MCF 10A (cell line): ENCODE measurements at regions of chr11 and their contacts with region 1.

Region 1: GRCh38 chr11:64846998-64847666 is 2.7 kb upstream of the CDC42BPG start:
- DNase-seq: peak; percentile 94
- H3K4me3 Mint-ChIP-seq: no peak overlapping the region
- H3K27ac Mint-ChIP-seq: no peak overlapping the region
- H3K4me1 Mint-ChIP-seq: peaks cover 33% of the 10 kb centered on the region
- H3K27me3 Mint-ChIP-seq: no peaks in the 10 kb centered on the region
- CTCF ChIP-seq: peak; percentile 98

Region 2: DNA sequence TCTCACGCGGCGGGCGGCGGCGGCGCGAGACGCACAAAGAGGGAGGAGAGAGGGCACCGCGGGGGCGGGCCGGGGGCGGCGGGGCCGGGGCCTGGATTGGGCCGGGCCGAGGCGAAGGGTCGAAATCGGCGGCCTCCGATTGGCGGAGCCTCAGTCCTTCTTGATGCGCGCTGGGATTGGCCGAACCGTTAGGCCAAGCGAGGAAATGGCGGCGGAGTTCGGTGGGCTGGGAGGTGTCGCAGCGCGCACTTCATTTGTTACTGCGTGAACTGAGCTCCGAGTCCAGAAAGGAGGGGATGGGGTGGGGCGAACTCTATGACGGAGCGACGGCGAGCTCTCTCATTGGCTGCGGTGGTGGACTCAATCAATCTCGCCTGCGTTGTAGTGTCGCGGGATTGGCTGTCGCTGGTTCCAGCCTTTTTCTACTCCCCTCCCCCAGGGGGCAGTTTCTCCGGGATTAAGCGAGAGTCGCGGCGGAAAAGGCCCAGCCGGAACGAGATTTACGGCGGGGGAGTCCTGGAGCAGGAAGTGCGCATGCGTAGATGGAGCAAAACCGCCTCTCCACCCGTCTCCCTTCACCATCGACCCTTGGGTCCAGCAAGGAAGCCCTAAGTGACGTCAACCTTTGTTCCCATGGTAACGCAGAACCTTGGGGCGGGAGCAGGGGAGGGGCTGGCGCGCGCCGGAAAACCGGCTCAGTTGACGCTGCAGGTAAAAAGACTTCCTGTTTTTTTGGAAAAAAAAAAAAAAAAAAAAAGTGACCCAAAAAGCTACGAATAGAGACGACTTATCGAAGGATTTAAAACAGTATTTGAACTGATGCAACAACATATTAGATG is 68.4 kb before region 1 on chr11 and contains the start of gene SF1:
- CTCF ChIA-PET with region 1: interaction called, 5 read pairs
- POLR2A ChIA-PET with region 1: interaction called, 12 read pairs
- intact Hi-C with region 1: no loop called
- DNase-seq: peak; percentile 100
- H3K4me3 Mint-ChIP-seq: peak within 1 kb of the TSS; percentile 76
- H3K27ac Mint-ChIP-seq: peak within 1 kb of the TSS; percentile 98
- H3K4me1 Mint-ChIP-seq: peaks cover 13% of the 10 kb centered on the region
- H3K27me3 Mint-ChIP-seq: no peaks in the 10 kb centered on the region
- CTCF ChIP-seq: no peak
- total RNA-seq, gene SF1: 446 and 503 TPM in 2 replicates

Region 3: GRCh38 chr11:64803163-64803845 is 43.8 kb before region 1 on chr11 and contains the start of gene MAP4K2:
- CTCF ChIA-PET with region 1: interaction called, 7 read pairs
- POLR2A ChIA-PET with region 1: interaction called, 8 read pairs
- intact Hi-C with region 1: loop called (anchors 2 kb)
- DNase-seq: peak; percentile 87
- H3K4me3 Mint-ChIP-seq: peak within 1 kb of the TSS; percentile 88
- H3K27ac Mint-ChIP-seq: peak within 1 kb of the TSS; percentile 81
- H3K4me1 Mint-ChIP-seq: peaks cover 9% of the 10 kb centered on the region
- H3K27me3 Mint-ChIP-seq: no peaks in the 10 kb centered on the region
- CTCF ChIP-seq: peak; percentile 16
- total RNA-seq, gene MAP4K2: 4.9 and 6.8 TPM in 2 replicates

Region 4: DNA sequence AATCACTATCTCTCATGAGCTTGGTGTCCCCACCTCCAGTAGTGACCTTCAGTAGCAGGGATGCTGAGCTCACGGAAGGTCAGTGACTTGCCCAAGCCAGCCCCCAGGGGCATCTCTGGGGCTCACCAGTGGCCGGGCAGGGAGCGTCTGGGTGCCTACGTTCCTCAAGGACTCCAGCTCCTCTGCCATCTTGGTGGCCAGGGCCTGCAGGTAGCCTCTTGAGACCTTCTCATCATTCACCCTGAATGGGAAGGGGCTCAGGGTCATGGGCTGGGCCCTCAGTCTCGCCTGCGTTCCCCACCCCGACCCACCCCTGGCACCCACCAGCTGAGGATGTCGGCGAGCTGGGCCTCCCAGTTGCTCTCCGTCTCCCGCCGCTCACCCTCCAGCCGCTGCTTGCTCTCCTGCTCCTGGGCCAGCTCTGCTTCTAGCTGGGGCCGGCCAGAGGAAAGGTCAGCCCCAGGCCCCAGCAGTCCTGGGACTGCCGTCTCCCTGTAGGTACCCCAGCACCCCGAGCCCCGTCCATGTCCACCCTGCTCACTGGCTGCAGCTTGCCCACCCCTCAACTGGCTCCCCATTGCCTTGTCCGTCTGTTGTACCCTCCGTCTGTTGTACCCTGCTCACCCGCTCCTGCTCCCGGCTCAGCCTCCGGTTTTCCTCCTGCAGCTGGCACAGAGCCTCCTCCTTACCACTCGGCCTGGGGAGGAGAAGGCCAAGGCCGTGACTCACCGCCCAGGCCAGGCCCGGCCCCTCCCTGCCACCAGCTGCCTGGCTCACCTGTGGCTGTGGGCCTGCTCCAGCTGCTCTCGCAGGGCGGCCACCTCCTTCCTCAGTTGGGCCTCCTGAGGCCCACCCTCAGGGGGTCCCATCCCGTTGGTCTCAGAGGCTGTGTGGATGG is 12.2 kb before region 1 on chr11:
- CTCF ChIA-PET with region 1: interaction called, 16 read pairs
- POLR2A ChIA-PET with region 1: interaction called, 13 read pairs
- intact Hi-C with region 1: no loop called
- DNase-seq: peak; percentile 87
- H3K4me3 Mint-ChIP-seq: peak overlapping the region; percentile 60
- H3K27ac Mint-ChIP-seq: peak overlapping the region; percentile 28
- H3K4me1 Mint-ChIP-seq: peaks cover 10% of the 10 kb centered on the region
- H3K27me3 Mint-ChIP-seq: no peaks in the 10 kb centered on the region
- CTCF ChIP-seq: no peak

Region 5: DNA sequence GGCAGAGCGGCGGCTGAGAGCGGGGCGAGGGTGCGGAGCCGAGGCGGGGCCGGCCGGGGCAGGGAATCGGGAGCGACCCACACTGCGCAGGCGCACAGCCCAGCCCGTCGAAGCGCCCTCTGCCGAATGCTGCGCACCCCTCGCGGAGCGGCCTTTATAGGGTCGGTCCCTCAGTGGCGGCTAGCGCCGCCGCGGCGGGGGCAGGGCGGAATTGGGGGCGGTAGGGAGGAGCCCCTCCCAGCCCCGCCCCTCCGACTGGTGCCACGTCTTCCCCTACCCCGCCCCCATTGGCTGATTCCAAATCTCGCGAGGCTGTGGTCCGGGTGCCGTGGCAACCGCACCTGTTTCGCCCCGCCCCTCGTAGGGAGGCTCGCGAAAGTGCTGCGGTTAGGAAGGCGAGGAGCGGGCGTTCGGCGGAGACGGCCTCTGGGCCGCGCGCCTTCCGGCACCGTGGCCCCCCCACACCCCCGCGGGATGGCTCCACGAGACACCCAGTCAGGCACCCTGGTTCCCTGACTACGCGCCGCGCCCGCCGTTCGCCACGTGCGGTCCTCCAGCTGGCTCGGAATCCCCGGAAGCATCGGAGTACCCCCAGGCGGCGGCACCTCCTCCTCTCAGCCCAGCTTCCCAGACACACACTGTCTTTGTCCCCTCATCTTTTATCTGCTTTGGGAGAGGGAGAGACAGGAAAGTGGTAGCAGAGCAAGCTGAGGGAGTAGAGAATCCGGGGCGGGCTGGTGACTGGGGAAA is 31.5 kb after region 1 on chr11 and contains the start of gene EHD1:
- CTCF ChIA-PET with region 1: interaction called, 286 read pairs
- POLR2A ChIA-PET with region 1: interaction called, 22 read pairs
- intact Hi-C with region 1: loop called (anchors 1 kb)
- DNase-seq: peak; percentile 98
- H3K4me3 Mint-ChIP-seq: peak within 1 kb of the TSS; percentile 95
- H3K27ac Mint-ChIP-seq: peak within 1 kb of the TSS; percentile 95
- H3K4me1 Mint-ChIP-seq: peaks cover 22% of the 10 kb centered on the region
- H3K27me3 Mint-ChIP-seq: no peaks in the 10 kb centered on the region
- CTCF ChIP-seq: peak; percentile 27
- total RNA-seq, gene EHD1: 67.9 and 80.6 TPM in 2 replicates

Region 6: DNA sequence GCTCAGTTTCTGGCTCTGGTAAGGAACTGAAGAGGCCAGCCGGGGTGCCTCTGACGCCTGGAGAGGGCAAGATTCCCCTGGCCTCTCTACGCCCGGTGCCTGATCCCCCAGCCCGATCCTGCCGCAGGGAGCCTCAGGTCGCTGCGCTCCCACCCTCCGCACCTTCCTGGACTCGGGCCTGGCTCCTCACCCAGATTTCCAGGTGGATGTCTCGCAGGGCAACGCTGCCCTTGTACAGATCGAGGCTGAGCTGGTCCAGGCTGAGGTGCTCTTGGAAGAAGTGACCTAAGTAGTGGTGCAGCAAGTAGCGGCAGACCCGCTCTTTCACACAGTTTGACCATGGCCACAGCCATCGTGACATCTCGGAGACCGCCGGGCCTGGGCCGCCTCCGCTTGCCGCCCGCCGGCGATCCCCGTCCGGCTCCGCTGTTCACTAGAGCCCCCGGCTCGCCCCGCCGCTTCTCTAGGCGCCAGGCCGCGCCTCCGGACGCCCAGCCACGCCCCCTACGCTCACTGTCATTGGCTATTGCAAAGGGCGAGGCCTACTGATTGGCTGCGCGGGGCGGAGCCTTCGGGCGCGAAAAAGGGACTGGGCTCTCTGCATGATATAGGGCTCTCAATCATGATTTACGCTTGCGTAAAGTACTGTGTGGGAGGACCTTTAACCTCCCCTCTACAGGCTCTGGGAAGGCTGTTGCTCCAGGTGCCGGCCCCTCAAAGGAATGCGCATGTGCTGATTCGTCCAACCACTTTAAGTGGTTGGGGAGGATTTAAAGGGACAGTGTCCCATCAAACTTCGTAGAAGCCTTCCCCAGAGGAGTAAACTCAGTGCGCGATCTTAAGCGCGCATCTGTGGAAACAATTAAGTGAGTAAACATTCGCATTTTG is 69.9 kb after region 1 on chr11 and contains the start of gene ATG2A:
- CTCF ChIA-PET with region 1: interaction called, 7 read pairs
- POLR2A ChIA-PET with region 1: interaction called, 8 read pairs
- intact Hi-C with region 1: loop called (anchors 1 kb)
- DNase-seq: peak; percentile 99
- H3K4me3 Mint-ChIP-seq: peak within 1 kb of the TSS; percentile 90
- H3K27ac Mint-ChIP-seq: peak within 1 kb of the TSS; percentile 98
- H3K4me1 Mint-ChIP-seq: peaks cover 6% of the 10 kb centered on the region
- H3K27me3 Mint-ChIP-seq: no peaks in the 10 kb centered on the region
- CTCF ChIP-seq: no peak
- total RNA-seq, gene ATG2A: 28.7 and 29.9 TPM in 2 replicates

Region 7: DNA sequence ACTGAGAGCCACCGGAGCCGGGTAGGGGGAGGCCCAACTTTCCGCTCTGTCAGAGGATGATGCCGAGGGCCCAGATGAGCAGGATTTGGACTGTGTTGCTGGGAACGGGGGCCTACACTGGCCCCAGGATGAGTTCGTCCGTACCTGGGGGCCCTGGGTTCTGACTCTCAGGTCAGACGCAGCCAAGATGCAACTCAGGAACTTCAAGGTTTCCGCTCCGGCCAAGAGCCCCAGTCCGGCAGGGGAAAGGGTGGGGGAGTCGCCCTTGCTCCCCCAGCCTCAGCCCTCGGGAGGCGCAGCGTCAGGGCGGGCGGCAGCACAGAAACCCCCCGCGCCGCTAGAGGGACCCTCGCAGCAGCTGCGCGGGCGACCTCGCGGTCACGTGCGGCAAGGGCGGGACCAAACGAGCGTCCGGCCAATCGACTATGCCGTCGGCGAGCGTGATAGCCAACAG is 166.6 kb after region 1 on chr11:
- CTCF ChIA-PET with region 1: interaction called, 38 read pairs
- POLR2A ChIA-PET with region 1: interaction called, 4 read pairs
- intact Hi-C with region 1: loop called (anchors 1 kb)
- DNase-seq: peak; percentile 82
- H3K4me3 Mint-ChIP-seq: peak overlapping the region; percentile 83
- H3K27ac Mint-ChIP-seq: peak overlapping the region; percentile 63
- H3K4me1 Mint-ChIP-seq: peaks cover 16% of the 10 kb centered on the region
- H3K27me3 Mint-ChIP-seq: no peaks in the 10 kb centered on the region
- CTCF ChIP-seq: no peak